Activated naive CD4-positive, alpha-beta T cell treated with anti-CD3 and anti-CD28 coated beads for 36 hours (primary cell): ENCODE measurements at regions of chr12 and their contacts with region 1.

Region 1: DNA sequence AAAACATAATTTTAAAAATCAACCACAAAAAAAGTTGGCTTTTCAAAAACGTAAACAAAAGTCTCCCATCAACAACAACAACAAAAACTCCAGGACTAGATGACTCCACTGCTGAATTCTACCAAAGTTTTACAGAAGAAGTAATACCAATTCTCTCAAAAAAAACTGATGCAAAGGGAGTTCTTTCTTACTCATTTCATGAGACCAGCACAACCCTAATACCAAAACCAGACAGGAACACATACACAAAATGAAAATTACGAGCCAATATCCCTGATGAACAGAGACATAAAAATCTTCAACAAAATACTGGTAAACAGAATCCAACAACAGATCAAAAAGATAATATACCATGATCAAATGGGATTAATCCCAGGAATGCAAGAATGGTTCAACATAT is 147.3 kb downstream of the BTG1 start:
- DNase-seq: no peak
- H3K4me3 Mint-ChIP-seq: no peak overlapping the region
- H3K27ac Mint-ChIP-seq: no peak overlapping the region
- H3K4me1 Mint-ChIP-seq: peaks cover 50% of the 10 kb centered on the region
- H3K27me3 Mint-ChIP-seq: no peaks in the 10 kb centered on the region

Region 2: GRCh38 chr12:92047393-92047826 is 49.1 kb after region 1 on chr12:
- CTCF ChIA-PET with region 1: no interaction called
- intact Hi-C with region 1: loop called (anchors 2 kb)
- DNase-seq: peak; percentile 43
- H3K4me3 Mint-ChIP-seq: peak overlapping the region; percentile 56
- H3K27ac Mint-ChIP-seq: peak overlapping the region; percentile 74
- H3K4me1 Mint-ChIP-seq: peaks cover 88% of the 10 kb centered on the region
- H3K27me3 Mint-ChIP-seq: no peaks in the 10 kb centered on the region